Endothelial cell of umbilical vein (primary cell): ENCODE measurements at regions of chr10 and their contacts with region 1.

Region 1: GRCh38 chr10:17607603-17608332 is 9.4 kb downstream of the HACD1 start:
- DNase-seq: peak; percentile 69
- H3K4me3 ChIP-seq: no peak overlapping the region
- H3K27ac ChIP-seq: no peak overlapping the region
- H3K4me1 ChIP-seq: peaks cover 6% of the 10 kb centered on the region
- H3K27me3 ChIP-seq: no peaks in the 10 kb centered on the region
- CTCF ChIP-seq: peak; percentile 42 to 55
- POLR2A ChIP-seq: no peak

Region 2: GRCh38 chr10:17533731-17534130 is 74.0 kb before region 1 on chr10:
- CTCF ChIA-PET with region 1: no interaction called
- POLR2A ChIA-PET with region 1: no interaction called
- dilution Hi-C with region 1: no loop called
- intact Hi-C with region 1: no loop called
- DNase-seq: no peak
- H3K4me3 ChIP-seq: no peak overlapping the region
- H3K27ac ChIP-seq: no peak overlapping the region
- H3K4me1 ChIP-seq: peaks cover under 1% of the 10 kb centered on the region
- H3K27me3 ChIP-seq: no peaks in the 10 kb centered on the region
- CTCF ChIP-seq: no peak
- POLR2A ChIP-seq: no peak

Region 3: GRCh38 chr10:17742918-17743317 is 135.2 kb after region 1 on chr10:
- CTCF ChIA-PET with region 1: interaction called, 6 read pairs
- POLR2A ChIA-PET with region 1: no interaction called
- dilution Hi-C with region 1: no loop called
- intact Hi-C with region 1: loop called (anchors 1 kb)
- DNase-seq: peak; percentile 66
- H3K4me3 ChIP-seq: no peak overlapping the region
- H3K27ac ChIP-seq: no peak overlapping the region
- H3K4me1 ChIP-seq: peaks cover 25% of the 10 kb centered on the region
- H3K27me3 ChIP-seq: no peaks in the 10 kb centered on the region
- CTCF ChIP-seq: peak; percentile 67 to 75
- POLR2A ChIP-seq: no peak

Region 4: GRCh38 chr10:17872191-17873091 is 264.7 kb after region 1 on chr10:
- CTCF ChIA-PET with region 1: interaction called, 46 read pairs
- POLR2A ChIA-PET with region 1: no interaction called
- dilution Hi-C with region 1: no loop called
- intact Hi-C with region 1: loop called (anchors 1 kb)
- DNase-seq: peak; percentile 73
- H3K4me3 ChIP-seq: no peak overlapping the region
- H3K27ac ChIP-seq: no peak overlapping the region
- H3K4me1 ChIP-seq: no peaks in the 10 kb centered on the region
- H3K27me3 ChIP-seq: no peaks in the 10 kb centered on the region
- CTCF ChIP-seq: peak; percentile 57 to 58
- POLR2A ChIP-seq: no peak

Region 5: DNA sequence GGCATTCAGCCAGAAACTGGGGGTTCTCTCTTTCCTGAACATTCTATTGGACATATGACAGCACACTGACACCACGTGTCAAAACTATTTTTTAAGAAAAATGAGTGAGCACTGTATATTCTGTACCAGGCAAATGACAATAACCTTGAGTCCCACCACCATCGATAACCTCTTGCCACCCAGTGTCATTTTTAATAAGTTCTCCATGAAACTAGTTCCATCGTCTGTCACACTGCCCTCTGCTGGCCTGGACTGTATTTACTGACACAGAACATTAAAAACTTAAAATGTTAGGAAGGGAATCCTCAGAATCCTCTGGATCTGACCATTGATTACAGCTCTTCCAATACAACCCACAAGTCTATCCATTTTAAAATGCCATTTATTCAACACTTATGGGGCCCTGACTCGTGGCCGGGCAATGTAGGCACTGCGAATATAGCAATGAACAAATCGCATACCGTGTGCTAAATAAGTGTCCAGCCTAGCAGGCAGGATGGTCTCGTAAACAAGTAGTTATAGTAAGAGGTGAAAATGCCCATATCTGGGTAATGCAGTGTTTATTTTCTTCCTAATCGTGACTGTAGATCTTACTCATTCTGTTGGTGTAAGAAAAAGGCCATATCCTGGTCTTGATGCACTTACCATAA is 496.6 kb after region 1 on chr10:
- CTCF ChIA-PET with region 1: interaction called, 3 read pairs
- POLR2A ChIA-PET with region 1: no interaction called
- dilution Hi-C with region 1: no loop called
- intact Hi-C with region 1: loop called (anchors 1 kb)
- DNase-seq: peak; percentile 52
- H3K4me3 ChIP-seq: no peak overlapping the region
- H3K27ac ChIP-seq: no peak overlapping the region
- H3K4me1 ChIP-seq: no peaks in the 10 kb centered on the region
- H3K27me3 ChIP-seq: no peaks in the 10 kb centered on the region
- CTCF ChIP-seq: peak; percentile 50 to 52
- POLR2A ChIP-seq: no peak

Region 6: DNA sequence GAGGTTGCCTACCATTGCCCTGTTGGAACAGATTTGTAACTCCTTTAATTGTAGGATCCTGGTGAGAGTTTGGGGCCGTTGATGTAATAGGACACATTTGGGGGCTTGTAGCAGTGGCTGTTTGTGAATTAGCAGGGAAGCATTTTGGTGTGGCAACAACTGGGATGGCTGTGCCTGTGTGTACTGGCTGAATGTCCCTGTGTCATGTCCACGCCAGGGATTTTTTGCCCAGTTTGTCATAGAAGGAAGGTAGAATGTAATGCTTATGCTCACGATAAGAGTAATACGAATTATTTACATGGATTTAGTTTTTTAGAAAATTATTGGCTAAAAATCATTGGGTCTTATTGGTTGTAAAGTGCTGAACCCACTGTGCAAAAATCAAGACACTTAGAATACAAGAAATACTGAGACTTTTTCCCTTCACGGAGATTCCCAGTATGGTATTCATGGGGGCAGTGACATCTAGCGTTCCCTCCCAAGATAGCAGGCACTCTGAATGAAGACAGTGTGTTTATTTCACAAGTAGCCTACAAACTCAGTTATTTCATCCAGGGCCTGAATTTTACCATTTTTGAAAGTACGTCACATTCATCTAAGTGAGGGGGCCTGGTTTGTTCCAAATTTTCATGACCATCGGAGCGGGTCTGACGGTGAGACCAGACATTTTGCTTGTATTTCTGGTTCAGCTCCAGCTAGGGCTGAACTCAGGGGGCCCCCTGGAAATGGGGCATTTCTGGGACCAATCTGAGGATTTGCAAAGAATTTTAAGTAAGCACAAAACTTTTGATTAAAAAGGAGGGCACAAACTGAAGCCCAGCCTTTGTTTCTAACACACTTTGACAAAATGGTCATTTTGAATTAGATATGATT is 607.2 kb after region 1 on chr10:
- CTCF ChIA-PET with region 1: interaction called, 9 read pairs
- POLR2A ChIA-PET with region 1: no interaction called
- dilution Hi-C with region 1: no loop called
- intact Hi-C with region 1: loop called (anchors 1 kb)
- DNase-seq: peak; percentile 55
- H3K4me3 ChIP-seq: no peak overlapping the region
- H3K27ac ChIP-seq: no peak overlapping the region
- H3K4me1 ChIP-seq: no peaks in the 10 kb centered on the region
- H3K27me3 ChIP-seq: no peaks in the 10 kb centered on the region
- CTCF ChIP-seq: peak; percentile 47 to 65
- POLR2A ChIP-seq: no peak

Region 7: GRCh38 chr10:18238870-18239485 is 631.2 kb after region 1 on chr10:
- CTCF ChIA-PET with region 1: no interaction called
- POLR2A ChIA-PET with region 1: no interaction called
- dilution Hi-C with region 1: no loop called
- intact Hi-C with region 1: loop called (anchors 1 kb)
- DNase-seq: peak; percentile 26
- H3K4me3 ChIP-seq: no peak overlapping the region
- H3K27ac ChIP-seq: no peak overlapping the region
- H3K4me1 ChIP-seq: no peaks in the 10 kb centered on the region
- H3K27me3 ChIP-seq: no peaks in the 10 kb centered on the region
- CTCF ChIP-seq: peak; percentile 37 to 42
- POLR2A ChIP-seq: no peak